Activated naive CD4-positive, alpha-beta T cell treated with anti-CD3 and anti-CD28 coated beads for 36 hours (primary cell): ENCODE measurements at regions of chr2 and their contacts with region 1.

Region 1: DNA sequence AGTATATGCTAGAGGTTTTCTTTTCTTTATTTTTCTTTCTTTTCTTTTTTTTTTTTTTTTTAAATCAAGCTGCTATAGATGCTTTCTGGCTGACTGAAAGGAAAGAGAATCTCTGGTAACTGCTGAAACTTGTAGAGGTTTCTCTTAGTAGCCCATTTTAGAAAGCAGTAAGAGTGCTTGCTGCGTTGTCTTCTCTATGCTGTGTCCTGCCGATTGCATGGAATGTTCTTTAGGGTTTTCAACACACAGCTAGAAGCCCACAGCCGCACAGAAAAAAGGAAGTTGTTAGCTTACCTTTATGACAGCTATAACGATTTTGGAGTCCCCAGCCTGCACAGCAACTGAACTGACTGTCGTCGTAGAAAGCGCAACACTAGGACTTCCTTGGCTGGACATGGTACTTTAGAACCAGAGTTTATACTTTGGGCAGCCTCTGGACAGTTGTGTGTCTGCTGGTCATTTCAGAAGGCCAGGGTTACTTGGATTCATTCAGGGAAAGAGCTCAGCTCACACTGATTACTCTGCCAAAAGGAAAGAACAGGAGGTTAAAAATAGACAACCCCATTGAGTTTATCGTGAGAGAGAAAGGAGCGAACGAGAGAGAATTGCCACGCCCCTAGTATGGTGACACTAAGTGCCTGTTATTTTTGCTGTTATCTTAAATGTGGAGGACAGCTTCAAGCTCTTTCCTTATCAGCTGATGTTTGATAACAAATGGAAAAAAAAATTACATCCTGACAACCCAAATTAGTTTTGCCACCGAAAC is at the start of gene CCDC141:
- DNase-seq: peak; percentile 50
- H3K4me3 Mint-ChIP-seq: peak within 1 kb of the TSS; percentile 86
- H3K27ac Mint-ChIP-seq: peak within 1 kb of the TSS; percentile 81
- H3K4me1 Mint-ChIP-seq: peaks cover 55% of the 10 kb centered on the region
- H3K27me3 Mint-ChIP-seq: no peaks in the 10 kb centered on the region
- total RNA-seq, gene CCDC141: 2.6 to 4.6 TPM

Region 2: DNA sequence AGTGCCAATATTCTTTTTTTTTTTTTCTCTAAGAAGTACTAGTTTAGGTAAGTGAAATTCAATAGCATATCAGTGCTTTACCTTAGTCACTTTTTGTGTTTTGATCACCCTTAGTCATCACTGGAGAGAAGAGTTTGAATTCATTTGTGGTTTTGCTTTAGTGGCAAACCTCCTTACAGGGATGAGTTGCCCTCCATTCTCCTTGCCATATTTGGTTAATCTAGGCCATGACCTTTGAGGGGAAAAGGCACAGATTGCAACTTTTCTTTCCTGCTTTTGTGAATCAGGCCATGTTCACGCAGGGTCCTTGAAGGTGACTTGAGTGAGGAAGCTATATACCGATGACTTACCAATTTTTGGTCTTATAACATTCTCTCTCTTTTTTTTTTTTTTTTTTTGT is 535.1 kb before region 1 on chr2:
- CTCF ChIA-PET with region 1: no interaction called
- intact Hi-C with region 1: loop called (anchors 5 kb)
- DNase-seq: peak; percentile 69
- H3K4me3 Mint-ChIP-seq: no peak overlapping the region
- H3K27ac Mint-ChIP-seq: peak overlapping the region; percentile 65
- H3K4me1 Mint-ChIP-seq: peaks cover 25% of the 10 kb centered on the region
- H3K27me3 Mint-ChIP-seq: no peaks in the 10 kb centered on the region

Region 3: GRCh38 chr2:178899656-178900055 is 150.1 kb before region 1 on chr2:
- CTCF ChIA-PET with region 1: no interaction called
- intact Hi-C with region 1: no loop called
- DNase-seq: no peak
- H3K4me3 Mint-ChIP-seq: no peak overlapping the region
- H3K27ac Mint-ChIP-seq: no peak overlapping the region
- H3K4me1 Mint-ChIP-seq: peaks cover 4% of the 10 kb centered on the region
- H3K27me3 Mint-ChIP-seq: no peaks in the 10 kb centered on the region

Region 4: DNA sequence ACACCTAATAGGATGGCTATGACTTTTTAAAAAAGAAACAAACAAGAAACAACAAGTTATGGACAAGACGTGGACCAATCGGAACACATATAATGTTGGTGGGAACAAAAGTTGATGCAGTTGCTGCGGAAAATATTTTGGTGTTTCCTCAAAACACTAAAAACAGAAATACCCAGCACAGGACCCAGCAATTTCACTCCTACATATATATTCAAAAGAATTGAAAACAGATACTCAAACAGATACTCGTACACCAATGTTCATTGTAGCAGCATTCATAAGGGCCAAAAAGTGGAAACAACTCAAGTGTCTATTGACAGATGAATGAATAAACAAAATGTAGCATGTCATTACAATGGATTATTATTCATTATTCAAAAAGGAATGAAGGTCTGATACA is 11.9 kb before region 1 on chr2:
- CTCF ChIA-PET with region 1: interaction called, 7 read pairs
- intact Hi-C with region 1: loop called (anchors 1 kb)
- DNase-seq: no peak
- H3K4me3 Mint-ChIP-seq: no peak overlapping the region
- H3K27ac Mint-ChIP-seq: no peak overlapping the region
- H3K4me1 Mint-ChIP-seq: peaks cover 34% of the 10 kb centered on the region
- H3K27me3 Mint-ChIP-seq: no peaks in the 10 kb centered on the region

Region 5: GRCh38 chr2:179106676-179107428 is 57.1 kb after region 1 on chr2:
- CTCF ChIA-PET with region 1: no interaction called
- intact Hi-C with region 1: loop called (anchors 1 kb)
- DNase-seq: peak; percentile 21
- H3K4me3 Mint-ChIP-seq: no peak overlapping the region
- H3K27ac Mint-ChIP-seq: no peak overlapping the region
- H3K4me1 Mint-ChIP-seq: peaks cover 30% of the 10 kb centered on the region
- H3K27me3 Mint-ChIP-seq: no peaks in the 10 kb centered on the region

Region 6: GRCh38 chr2:179239195-179239594 is 189.5 kb after region 1 on chr2:
- CTCF ChIA-PET with region 1: no interaction called
- intact Hi-C with region 1: loop called (anchors 5 kb)
- DNase-seq: no peak
- H3K4me3 Mint-ChIP-seq: no peak overlapping the region
- H3K27ac Mint-ChIP-seq: no peak overlapping the region
- H3K4me1 Mint-ChIP-seq: peaks cover 27% of the 10 kb centered on the region
- H3K27me3 Mint-ChIP-seq: peaks cover 2% of the 10 kb centered on the region